ENCODE measurements at regions of chr5 and their contacts with region 1.

Region 1: DNA sequence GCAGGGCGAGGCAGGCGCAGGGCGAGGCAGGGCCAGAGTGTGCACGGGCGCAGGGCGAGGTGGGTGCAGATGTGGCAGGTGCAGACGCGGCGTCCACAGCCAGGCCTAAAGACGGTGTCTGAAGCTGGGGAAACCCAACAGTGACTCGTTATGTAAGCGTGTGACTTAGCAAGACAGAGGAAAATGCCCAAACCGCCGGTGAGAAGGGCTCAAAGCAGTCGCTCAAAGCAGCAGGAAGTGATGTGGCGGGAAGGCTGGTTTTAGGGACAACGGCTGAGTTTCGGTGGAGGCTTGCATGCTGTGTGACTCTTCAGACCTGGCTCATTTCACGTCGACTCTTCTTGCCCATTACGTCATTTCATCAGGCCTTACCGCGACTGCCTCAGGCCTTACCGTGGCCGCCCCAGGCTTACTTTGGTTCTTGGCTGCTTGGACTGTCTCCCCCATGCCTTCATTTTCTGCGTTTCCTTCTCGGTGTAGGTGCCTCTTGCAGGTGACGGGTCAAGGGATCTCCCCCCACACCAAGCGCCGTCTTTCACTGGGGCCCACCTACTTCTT is 50.5 kb upstream of the EXOC3 start:
- DNase-seq: peak; percentile 97
- ATAC-seq: peak; percentile 91
- H3K4me3 Mint-ChIP-seq: peak overlapping the region; percentile 82
- H3K27ac Mint-ChIP-seq: peak overlapping the region; percentile 98
- H3K4me1 Mint-ChIP-seq: peaks cover 33% of the 10 kb centered on the region
- H3K27me3 Mint-ChIP-seq: no peaks in the 10 kb centered on the region
- CTCF ChIP-seq: no peak

Region 2: DNA sequence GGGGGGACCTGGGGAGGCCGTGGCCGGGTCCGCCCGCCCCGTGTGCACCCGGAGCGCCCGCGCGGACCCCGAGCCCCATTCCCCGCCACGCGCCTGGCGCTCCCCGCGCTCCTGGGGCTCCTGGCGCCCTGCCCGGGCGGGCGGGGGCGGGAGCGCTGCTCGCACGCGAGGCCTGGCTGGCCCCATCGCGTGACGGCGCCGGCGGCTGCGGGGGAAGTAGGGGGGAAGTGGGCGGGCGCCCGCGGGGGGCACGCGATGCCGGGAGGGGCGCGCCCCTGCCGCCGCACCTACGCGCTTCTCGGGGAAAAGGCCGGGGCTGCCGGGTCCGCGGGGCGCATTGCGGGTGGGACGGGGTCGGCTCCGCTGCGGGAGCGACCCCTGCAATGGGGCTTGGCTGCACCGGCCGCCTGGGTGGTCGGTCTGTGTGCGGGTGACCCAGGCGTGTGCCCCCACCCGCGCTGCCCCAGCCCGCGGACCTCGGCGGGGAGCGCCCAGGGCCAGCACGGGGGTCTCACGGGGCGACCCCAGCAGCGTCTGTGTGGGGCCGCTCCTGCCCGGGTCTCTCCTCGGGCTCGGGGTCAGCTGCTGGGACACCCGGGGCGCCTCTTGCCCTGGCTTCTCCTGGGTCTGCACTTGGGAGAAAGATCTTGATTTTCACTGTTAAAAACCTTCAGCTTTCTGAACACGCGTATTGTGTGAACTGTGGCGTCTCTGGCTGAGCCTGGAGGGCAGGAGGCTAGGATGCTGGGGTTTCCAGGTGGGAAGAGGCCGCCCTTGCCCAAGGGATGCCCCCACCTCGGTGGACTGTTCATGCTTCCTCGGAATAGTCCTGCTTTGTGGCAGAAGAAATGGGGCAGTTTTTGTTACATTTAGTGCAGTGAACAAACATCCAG is 18.6 kb before region 1 on chr5:
- CTCF ChIA-PET with region 1: interaction called, 6 read pairs
- POLR2A ChIA-PET with region 1: interaction called, 53 read pairs
- intact Hi-C with region 1: loop called (anchors 2 kb)
- DNase-seq: peak; percentile 80
- ATAC-seq: peak; percentile 32
- H3K4me3 Mint-ChIP-seq: peak overlapping the region; percentile 59
- H3K27ac Mint-ChIP-seq: peak overlapping the region; percentile 97
- H3K4me1 Mint-ChIP-seq: peaks cover 80% of the 10 kb centered on the region
- H3K27me3 Mint-ChIP-seq: no peaks in the 10 kb centered on the region
- CTCF ChIP-seq: no peak

Region 3: DNA sequence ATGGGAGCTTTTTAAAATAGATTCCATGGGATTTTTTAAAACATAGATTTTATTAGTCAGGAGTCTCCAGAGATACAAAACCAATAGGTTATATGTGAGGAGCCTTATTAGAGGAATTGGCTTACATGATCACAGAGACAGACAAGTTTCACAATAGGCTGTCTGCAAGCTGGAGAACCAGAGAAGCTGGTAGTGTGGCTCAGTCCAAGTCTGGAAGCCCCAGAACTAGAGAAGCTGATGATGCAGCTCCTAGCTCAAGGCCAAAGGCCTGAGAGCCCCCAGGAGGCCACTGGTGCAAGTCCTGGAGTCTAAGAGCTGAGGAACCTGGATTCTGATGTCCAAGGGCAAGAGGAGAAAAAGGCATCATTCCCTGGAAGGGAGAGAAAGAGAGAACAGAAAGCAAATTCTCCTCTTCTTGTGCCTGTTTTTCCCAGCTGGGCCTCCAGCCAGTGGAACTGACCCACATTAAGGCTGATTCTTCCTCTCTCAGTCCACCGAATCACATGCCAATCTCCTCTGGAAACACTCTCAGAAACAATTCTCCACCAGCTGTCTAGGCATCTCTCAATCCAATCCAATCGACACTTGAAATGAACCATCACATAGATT is 11.7 kb before region 1 on chr5:
- CTCF ChIA-PET with region 1: interaction called, 6 read pairs
- POLR2A ChIA-PET with region 1: interaction called, 53 read pairs
- intact Hi-C with region 1: loop called (anchors 2 kb)
- DNase-seq: no peak
- ATAC-seq: no peak
- H3K4me3 Mint-ChIP-seq: no peak overlapping the region
- H3K27ac Mint-ChIP-seq: peak overlapping the region; percentile 28
- H3K4me1 Mint-ChIP-seq: peaks cover 66% of the 10 kb centered on the region
- H3K27me3 Mint-ChIP-seq: no peaks in the 10 kb centered on the region
- CTCF ChIP-seq: no peak

Region 4: DNA sequence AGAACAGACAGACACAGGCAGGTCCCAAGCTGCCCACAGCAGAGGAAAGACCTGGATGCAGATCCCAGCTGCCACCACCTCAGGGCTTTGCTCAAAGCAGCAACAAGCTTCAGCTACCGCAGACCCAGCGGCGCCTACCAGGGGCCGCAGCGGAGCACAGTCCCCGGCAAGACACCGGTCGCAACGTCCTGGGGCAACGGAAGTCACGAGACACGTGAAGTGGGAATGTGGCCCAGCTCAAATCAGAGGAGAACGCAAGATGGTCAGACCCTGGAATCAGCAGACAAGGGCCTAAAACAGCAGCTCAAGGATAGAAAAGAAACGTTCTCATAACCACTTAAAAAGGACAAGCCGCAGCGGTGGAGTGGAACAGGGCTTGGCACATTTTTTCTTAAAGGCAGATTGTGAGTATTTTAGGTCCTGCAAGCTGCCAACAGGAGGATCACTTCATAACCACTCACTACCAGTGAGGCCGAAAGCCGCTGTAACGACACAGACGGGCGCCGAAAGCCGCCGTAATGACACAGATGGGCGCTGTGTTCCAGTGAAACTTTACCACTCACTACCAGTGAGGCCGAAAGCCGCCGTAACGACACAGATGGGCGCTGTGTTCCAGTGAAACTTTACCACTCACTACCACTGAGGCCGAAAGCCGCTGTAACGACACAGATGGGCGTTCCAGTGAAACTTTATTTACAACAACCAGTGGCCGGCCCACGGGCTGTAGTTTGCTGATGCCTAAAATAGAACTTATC is 110.0 kb after region 1 on chr5:
- CTCF ChIA-PET with region 1: no interaction called
- POLR2A ChIA-PET with region 1: no interaction called
- intact Hi-C with region 1: no loop called
- DNase-seq: no peak
- ATAC-seq: no peak
- H3K4me3 Mint-ChIP-seq: no peak overlapping the region
- H3K27ac Mint-ChIP-seq: no peak overlapping the region
- H3K4me1 Mint-ChIP-seq: no peaks in the 10 kb centered on the region
- H3K27me3 Mint-ChIP-seq: peaks cover 12% of the 10 kb centered on the region
- CTCF ChIP-seq: no peak